ENCODE measurements at regions of chr7 and their contacts with region 1.

Region 1: GRCh38 chr7:76057813-76058145 is 9.9 kb downstream of the MDH2 start:
- DNase-seq: no peak
- H3K4me3 ChIP-seq: no peak overlapping the region
- CTCF ChIP-seq: no peak

Region 2: DNA sequence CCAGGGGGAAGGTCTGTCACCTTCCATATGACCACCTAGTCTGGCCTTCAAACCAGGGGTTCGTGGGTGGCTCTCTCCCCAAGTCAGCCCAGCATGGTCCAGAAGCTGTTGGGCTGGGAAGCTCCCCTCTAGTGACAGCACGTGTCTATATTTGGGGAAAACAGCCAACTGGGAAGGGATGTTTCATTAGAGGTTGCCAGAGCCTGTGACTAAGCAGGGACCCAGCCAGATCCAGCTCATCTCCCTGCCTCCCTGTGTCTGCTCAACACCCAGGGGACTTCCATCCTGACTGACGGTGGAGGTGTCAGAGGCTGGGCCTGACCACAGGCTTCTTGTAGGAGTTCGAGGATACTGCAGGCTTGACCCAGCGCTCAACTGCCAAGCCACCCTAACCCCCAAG is 20.5 kb before region 1 on chr7:
- CTCF ChIA-PET with region 1: no interaction called
- POLR2A ChIA-PET with region 1: no interaction called
- DNase-seq: peak; percentile 67
- H3K4me3 ChIP-seq: no peak overlapping the region
- CTCF ChIP-seq: no peak

Region 3: DNA sequence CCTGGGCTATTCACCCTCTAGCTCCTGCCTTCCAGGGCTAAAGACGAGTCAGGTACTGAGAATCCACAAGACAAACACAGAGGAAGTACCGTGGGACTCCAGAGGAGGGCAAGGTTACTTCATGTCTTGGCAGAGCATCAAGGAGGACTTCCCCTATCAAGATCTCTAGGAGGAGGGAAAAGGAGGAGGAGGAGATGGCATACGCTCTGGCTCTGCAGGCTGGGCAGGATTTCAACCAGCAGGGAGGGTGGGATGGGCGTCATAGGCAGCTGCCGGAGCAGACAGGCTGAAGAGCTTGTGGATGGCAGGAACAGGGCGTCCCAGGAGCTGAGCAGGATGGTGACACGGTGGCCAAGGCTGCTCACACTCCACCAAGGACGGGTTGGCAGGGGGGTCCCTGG is 11.5 kb after region 1 on chr7:
- CTCF ChIA-PET with region 1: interaction called, 13 read pairs
- POLR2A ChIA-PET with region 1: no interaction called
- DNase-seq: peak; percentile 89
- H3K4me3 ChIP-seq: no peak overlapping the region
- CTCF ChIP-seq: peak; percentile 47

Region 4: GRCh38 chr7:76291343-76292212 is 233.8 kb after region 1 on chr7:
- CTCF ChIA-PET with region 1: no interaction called
- POLR2A ChIA-PET with region 1: no interaction called
- DNase-seq: peak; percentile 93
- H3K4me3 ChIP-seq: peak overlapping the region; percentile 36
- CTCF ChIP-seq: peak; percentile 89

Measured in AG04449 (cell line).